Calu3 (cell line): ENCODE measurements at regions of chr11 and their contacts with region 1.

Region 1: DNA sequence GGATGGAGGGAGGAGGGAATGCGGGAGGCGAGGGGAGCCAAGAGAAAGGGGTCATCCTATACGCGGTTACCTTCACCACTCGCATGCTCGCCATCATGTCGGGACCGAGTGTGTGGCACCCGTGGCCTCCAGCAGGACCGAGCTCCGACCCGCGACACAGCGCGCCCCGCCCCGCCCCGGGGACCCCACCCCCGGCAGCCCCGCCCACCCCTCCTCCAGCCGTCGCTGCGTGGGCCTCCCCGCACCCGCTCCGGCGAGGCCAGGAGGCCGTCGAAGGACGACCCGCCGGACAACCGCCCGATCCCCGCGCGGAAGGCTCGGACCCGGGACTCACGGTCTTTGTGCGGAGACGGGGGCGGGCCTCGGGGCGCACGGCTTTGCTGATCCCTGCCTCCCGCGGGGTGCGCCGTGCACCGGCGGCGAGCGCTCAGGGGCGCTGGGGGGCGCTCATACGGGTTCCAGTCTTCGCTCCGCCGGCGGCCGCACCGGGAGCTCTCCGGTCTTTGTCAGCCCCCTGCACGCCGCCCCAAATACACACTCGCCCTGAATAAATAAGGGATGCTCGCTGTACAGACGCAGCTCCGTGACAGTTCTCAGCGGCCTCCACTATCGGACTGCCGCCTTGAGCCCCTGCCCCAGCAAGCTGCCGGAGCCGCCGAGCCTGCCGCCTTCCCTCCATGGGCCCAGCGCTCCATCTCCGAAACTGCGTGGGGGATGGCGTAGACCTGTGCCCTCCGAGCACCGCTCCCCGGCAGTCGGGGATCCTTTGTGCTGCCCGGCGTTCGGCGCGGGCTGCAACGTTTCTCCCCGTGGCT is at the start of gene UBE2L6:
- DNase-seq: peak; percentile 63
- H3K4me3 Mint-ChIP-seq: peak within 1 kb of the TSS; percentile 98
- H3K27ac Mint-ChIP-seq: no peak within 1 kb of the TSS
- H3K4me1 Mint-ChIP-seq: peaks cover 25% of the 10 kb centered on the region
- H3K27me3 Mint-ChIP-seq: no peaks in the 10 kb centered on the region
- CTCF ChIP-seq: peak; percentile 85
- total RNA-seq, gene UBE2L6: 80.8 and 170 TPM in 2 replicates

Region 2: GRCh38 chr11:57523419-57523818 is 44.3 kb before region 1 on chr11:
- CTCF ChIA-PET with region 1: no interaction called
- intact Hi-C with region 1: no loop called
- DNase-seq: no peak
- H3K4me3 Mint-ChIP-seq: no peak overlapping the region
- H3K27ac Mint-ChIP-seq: peak overlapping the region; percentile 8
- H3K4me1 Mint-ChIP-seq: peaks cover 12% of the 10 kb centered on the region
- H3K27me3 Mint-ChIP-seq: no peaks in the 10 kb centered on the region
- CTCF ChIP-seq: no peak

Region 3: DNA sequence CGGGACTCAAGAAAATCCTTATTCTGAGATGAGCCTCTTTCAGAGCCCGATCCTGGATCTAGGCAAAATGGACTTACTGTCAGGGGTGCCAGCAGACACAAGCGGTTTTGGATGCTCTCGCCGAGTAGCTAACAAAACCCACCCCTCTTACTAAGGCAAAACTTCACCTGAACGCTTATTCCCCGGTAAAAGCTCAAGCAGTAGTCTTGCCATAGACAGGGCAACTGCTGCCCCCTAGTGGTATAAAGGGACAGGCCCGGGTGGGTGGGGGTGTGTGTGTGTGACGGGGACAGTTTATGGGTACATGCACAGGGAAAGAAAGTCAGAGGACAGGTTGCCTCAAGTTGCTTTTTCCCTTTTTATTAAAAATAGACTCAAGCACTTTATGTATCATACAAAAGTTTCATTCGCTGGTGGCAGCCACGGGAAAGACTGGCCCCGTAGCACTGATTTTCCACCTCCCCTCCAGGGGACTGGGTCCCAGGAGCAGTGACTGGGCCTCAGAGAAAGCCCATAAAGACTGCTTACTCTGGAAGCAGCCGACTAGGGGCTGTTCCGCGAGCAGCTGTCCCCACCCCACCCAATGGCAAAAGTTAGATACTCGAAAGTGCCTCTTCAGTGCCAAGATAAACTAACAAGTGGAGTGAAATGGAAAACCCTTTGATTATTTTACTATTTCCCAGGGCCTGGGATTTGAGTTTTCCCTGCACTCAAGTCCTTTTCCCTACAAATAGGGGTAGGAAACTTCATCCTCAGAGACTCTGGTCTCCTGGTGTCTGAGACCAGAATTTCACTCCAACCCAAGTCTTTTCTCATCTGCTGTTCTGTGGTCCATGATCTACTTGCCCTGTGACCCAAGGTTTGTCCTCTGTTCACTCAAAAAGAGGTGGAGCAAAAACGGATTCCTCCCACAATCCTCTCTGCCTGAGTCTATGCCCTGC is 77.3 kb after region 1 on chr11:
- CTCF ChIA-PET with region 1: interaction called, 62 read pairs
- intact Hi-C with region 1: loop called (anchors 1 kb)
- DNase-seq: peak; percentile 88
- H3K4me3 Mint-ChIP-seq: no peak overlapping the region
- H3K27ac Mint-ChIP-seq: no peak overlapping the region
- H3K4me1 Mint-ChIP-seq: peaks cover 28% of the 10 kb centered on the region
- H3K27me3 Mint-ChIP-seq: peaks cover 66% of the 10 kb centered on the region
- CTCF ChIP-seq: peak; percentile 73